RWPE1 (cell line): ENCODE measurements at regions of chr17 and their contacts with region 1.

Region 1: DNA sequence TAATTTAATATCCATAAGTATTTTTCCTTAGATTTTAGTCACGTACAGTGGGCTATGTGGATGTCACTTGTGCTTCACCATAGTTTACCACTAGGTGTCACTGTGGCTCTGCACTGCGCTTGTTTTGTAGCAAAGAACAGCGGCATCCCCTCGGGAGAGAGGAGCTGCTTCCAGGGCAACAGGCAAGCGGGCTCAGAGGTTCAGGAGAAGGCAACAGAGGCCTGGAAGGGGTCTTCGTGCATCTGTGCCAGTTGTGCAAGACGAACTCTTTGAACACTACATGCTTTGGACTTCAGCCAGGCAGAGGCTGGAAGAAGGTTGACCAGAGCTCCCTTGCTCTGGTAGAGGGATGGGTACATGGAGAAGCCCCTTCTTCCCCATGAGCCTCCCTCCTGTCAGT is 20.6 kb downstream of the CYB561 start:
- DNase-seq: peak; percentile 59
- H3K27ac ChIP-seq: peak overlapping the region; percentile 22
- CTCF ChIP-seq: peak; percentile 98

Region 2: DNA sequence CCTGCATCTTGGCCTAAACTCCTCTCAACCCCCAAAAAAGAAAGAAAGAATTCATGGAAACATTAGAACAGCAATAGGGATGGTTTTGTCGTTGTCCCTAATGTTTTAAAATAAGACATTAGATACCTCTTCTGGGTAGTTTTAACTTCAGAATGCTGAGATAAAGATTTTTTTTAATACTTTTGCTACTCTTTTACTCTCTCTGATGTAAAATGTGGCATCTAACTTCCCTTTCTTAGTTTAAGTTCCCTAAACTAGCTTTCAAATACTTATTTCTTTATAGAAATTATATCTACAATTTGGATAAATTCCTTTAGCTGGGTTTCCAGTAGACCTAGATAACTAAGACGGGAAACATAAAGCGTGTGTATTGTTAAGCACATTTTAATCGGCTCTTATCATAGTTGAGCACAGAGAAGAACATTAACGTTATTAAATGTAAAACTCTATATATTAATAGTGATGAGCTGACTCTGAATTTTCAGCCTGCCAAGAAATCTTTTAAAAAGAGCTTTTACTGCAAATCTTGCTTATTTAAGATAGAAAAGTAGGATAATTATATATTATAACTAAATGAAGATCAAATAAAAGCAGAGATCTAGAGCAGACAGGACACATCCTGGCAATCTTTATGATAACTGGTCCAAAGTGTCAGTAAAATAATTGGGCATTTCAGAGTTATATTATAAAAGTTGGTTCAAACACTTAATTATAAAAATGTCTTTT is 162.6 kb before region 1 on chr17:
- CTCF ChIA-PET with region 1: no interaction called
- POLR2A ChIA-PET with region 1: no interaction called
- DNase-seq: no peak
- H3K27ac ChIP-seq: no peak overlapping the region
- CTCF ChIP-seq: no peak

Region 3: GRCh38 chr17:63398680-63399079 is 26.8 kb before region 1 on chr17:
- CTCF ChIA-PET with region 1: no interaction called
- POLR2A ChIA-PET with region 1: no interaction called
- DNase-seq: no peak
- H3K27ac ChIP-seq: no peak overlapping the region
- CTCF ChIP-seq: no peak

Region 4: GRCh38 chr17:63445979-63446691 is 20.7 kb after region 1 on chr17 and contains the start of gene CYB561:
- CTCF ChIA-PET with region 1: interaction called, 17 read pairs
- POLR2A ChIA-PET with region 1: no interaction called
- DNase-seq: peak; percentile 84
- H3K27ac ChIP-seq: peak within 1 kb of the TSS; percentile 78
- CTCF ChIP-seq: peak; percentile 84

Region 5: DNA sequence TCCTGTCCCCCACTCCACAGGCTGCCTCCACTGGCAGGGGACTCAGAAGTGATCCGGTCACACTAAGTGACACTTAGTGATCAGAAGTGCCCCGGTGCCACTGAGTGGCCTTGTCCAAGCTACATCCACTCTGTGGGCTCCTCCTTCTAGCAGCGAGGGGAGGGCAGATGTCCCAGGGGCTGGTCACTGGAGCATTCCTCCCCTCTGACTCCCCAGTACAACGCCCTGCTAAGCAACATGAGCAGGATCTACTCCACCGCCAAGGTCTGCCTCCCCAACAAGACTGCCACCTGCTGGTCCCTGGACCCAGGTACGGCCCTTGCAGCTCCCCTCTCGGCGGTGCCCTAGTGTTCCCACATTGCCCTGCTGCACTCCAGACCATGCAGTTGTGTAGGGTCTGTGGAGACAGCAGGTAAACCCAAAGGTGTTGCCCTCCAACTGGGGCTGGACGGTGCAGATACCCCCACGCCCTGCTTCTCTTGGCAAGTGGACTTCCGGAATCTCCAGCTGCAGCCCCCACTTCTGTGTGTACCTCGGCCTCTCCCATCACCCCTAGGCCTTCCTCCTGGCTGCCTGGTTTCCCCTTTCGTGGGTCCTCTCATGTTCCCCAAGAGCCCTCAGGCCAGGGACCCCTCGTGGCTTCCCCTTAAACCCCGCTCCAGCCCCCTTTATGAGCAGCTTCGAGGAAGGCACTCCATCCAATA is 53.5 kb after region 1 on chr17:
- CTCF ChIA-PET with region 1: interaction called, 60 read pairs
- POLR2A ChIA-PET with region 1: no interaction called
- DNase-seq: peak; percentile 96
- H3K27ac ChIP-seq: no peak overlapping the region
- CTCF ChIP-seq: peak; percentile 80

Region 6: DNA sequence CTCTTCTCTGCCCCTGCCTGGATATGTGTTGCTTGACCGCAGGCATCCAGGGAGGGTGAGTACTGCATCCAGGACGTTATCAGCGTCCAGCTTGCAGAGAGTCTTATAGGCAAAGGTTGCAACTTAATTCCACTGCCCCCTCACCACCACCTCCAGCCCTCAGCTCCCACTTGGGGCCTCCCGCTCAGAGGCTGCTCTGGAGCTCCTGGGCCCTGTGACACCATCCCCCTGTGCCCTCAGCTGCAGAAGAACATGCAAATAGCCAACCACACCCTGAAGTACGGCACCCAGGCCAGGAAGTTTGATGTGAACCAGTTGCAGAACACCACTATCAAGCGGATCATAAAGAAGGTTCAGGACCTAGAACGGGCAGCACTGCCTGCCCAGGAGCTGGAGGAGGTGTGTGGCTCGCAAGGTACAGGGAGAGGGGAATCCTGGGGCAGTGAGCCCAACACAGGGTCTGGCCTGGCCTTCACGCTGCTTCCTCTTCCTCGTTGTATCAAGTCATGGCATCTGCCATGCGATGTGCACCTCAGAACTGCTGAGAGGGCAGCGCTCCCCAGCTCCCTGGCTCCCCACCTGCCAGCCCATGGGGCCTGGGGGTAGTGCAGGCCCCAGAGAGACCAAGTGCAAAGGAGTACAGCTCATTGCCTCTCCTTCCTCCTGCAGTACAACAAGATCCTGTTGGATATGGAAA is 61.0 kb after region 1 on chr17:
- CTCF ChIA-PET with region 1: interaction called, 10 read pairs
- POLR2A ChIA-PET with region 1: no interaction called
- DNase-seq: no peak
- H3K27ac ChIP-seq: no peak overlapping the region
- CTCF ChIP-seq: no peak

Region 7: DNA sequence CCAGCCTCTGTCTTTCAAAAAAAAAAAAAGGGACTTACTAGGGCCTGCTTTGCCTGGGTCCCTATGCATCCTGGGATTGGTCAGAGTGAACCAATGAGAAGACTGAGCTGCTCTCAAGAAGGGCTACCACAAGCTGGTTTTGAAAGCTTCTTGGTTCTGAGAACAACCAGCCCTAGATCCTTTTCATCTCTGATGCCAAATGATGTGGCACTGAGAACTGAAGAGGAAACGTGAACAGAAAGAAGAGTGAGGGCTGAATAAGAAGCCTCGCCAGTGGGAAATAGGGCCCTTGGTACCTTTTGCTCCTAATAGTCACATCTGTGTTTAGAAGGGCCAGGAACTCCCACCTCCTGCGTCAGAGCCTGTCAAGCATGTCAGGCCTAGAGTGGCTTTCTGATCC is 185.9 kb after region 1 on chr17:
- CTCF ChIA-PET with region 1: interaction called, 18 read pairs
- POLR2A ChIA-PET with region 1: no interaction called
- DNase-seq: no peak
- H3K27ac ChIP-seq: 0 out of 2 replicates have a peak overlapping the region, but pooled peaks have one; percentile 17
- CTCF ChIP-seq: no peak